ENCODE measurements at regions of chr12 and their contacts with region 1.

Region 1: DNA sequence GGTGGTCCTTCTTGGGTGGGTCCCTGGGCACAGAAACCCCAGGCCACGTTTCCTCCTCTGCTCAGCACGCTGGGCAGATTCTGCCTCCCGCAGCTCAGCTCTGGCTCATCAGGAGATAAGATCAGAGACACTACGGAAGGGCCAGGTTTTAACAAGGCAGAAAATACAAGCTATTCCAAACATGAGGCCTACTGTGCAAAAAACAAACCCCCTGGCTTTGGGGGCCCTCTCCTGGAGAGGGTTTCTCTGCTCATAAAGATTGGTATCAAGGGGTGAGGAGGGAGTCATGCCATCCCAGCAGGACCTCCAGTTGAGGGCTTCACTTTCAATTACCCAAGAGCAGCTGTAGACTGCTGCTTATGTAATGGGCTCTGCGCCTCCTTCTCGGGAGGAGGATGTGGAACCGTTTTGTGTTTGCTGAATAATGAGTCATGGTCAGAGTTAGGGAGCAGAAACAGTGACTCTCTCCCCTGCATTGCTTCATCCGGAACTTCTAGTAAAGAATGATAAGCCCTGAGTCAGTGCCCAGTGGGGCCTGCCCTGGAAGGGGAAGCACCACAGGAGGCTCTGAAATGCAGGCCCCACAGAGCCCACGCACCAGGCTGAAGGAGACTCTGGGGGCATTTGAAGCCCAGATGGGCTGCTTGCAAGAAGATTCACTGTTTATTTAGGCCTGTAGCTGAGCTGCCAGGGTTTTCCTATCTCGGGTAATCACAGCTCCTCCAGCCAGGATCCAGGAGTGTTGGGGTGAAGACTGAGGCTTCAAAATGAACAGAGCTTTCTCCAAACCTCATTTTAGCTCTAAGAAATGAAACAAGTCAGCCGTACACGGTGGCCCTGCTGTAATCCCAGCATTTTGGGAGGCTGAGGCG is 79.3 kb downstream of the SSPN start:
- DNase-seq: peak; percentile 76
- H3K4me3 Mint-ChIP-seq: no peak overlapping the region
- H3K27ac Mint-ChIP-seq: no peak overlapping the region
- H3K4me1 Mint-ChIP-seq: peaks cover 8% of the 10 kb centered on the region
- H3K27me3 Mint-ChIP-seq: no peaks in the 10 kb centered on the region

Region 2: DNA sequence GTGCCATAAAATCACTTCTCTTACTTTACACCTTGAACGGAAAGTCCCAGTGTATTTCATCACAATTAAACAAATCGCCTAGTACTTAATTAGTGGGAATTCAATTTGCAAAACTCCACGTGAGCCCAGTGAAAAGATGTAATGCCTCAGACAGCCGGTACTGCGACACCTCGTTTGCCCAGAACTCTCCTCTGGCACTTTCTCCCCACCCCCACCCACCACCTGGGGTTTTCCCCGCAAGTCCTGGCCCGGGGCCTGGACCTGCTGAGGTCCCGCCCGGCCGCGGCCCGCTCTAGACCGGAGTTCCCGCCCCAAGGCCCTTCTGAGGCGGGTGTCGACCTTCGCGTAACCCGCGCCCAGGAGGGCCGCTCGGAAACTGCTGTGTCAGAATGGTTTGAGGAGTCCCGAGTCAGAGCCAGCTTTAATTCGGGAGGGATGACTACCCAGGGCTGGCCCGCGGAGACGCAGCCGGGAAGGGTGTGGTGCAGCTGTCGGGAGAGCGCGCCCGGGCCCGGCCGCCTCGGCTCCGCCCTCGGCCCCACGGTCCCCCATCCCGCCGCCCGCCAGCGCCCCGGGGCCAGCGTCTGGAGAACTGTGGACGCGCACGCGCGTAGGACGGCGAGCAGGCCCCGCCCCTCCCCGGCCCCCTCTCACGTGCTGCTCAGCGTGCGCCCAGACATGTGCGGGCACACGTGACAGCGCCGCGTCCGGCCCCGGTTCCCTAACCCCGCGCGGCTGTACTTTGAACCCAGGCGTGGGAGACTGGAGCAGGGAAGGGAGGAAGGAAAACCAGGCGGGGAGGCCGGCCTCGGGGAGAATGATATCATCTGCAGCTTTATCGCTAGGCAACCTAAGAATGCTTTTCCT is 160.6 kb before region 1 on chr12:
- CTCF ChIA-PET with region 1: no interaction called
- intact Hi-C with region 1: loop called (anchors 1 kb)
- DNase-seq: peak; percentile 82
- H3K4me3 Mint-ChIP-seq: peak overlapping the region; percentile 68
- H3K27ac Mint-ChIP-seq: peak overlapping the region; percentile 22
- H3K4me1 Mint-ChIP-seq: peaks cover 6% of the 10 kb centered on the region
- H3K27me3 Mint-ChIP-seq: peaks cover 35% of the 10 kb centered on the region

Region 3: DNA sequence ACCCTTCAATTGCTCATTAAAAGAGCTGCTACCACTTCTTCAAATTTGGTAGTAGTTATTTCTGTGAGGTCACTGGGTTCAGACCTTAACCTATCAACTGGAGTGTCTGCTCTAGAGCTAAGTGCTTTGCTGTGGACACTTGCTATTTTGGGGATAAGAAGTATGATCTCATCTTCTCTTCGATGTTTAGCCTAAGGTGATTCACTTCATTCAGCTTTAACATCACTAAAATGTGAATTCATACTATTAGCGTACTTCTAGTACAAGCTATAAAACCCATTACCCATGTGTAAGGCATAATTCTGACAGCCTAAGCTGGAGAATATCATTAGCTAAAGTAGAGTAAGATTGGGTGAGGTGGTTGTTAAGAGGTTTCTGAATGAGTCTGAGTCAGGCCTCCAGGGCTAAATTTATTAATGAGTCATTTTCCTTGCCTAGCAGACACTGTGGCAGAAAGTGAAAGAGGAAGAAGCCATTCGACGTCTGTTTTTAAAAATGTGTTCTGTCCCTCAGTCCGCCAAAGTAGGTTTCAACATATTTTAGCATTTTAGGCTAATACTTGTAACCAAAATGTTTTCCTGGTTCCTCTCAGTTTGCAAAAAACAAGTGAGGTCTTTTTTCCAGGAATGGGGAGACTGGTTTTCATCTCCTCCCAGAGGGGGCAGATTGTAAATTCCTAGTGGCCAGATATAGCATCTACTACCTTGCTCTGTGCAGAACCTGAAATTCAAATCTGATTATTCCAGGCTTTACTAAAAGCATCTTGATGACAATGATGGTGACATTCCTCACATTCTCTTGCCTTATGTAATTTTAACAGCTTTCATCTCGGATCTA is 24.3 kb after region 1 on chr12:
- CTCF ChIA-PET with region 1: interaction called, 3 read pairs
- intact Hi-C with region 1: loop called (anchors 1 kb)
- DNase-seq: no peak
- H3K4me3 Mint-ChIP-seq: no peak overlapping the region
- H3K27ac Mint-ChIP-seq: no peak overlapping the region
- H3K4me1 Mint-ChIP-seq: peaks cover 22% of the 10 kb centered on the region
- H3K27me3 Mint-ChIP-seq: peaks cover 10% of the 10 kb centered on the region